ENCODE measurements at regions of chr4 and their contacts with region 1.

Region 1: DNA sequence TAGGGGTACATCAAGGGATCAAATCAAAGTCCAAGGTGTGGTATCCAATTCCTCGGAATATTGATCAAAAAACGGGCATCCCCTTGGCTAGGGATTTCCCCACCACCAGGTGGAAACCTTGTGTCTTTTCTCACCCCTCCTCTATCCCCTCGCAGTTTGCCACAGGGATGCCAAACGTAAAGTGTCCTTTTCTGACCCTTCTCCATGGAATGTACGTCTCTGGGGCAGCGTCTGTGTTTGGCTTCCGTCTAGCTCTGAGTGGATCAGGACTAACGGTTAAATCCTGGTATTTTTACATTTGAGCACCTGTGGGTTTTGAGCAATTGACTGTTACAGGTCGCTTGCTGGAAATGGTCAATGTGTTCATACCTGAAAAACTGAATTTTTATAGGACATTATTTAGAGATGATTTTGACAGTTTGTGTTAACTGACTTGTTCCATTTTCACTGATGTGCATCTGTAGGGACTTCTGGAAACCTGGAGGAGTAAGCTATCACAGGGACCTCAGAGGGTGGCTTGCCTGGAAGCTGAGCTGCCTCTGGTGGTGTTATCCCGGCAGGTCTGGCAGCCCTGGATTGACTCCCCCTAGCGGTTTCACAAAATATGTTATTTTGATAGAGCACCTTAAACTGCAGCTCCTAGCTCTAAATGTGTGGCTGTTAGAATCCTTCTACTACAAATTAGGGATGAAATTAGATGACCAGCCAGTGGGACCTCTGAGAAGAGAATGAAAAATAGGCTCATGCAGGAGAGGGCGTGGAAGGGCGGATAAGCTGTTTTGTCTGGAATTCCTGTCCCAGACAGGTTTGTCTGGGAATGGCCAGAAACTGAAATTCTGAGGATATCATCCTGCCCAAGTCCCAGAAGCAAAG is 8.8 kb upstream of the MGST2 start:
- DNase-seq: peak; percentile 67
- H3K4me3 Mint-ChIP-seq: peak overlapping the region; percentile 57
- H3K27ac Mint-ChIP-seq: peak overlapping the region; percentile 83
- H3K4me1 Mint-ChIP-seq: peaks cover 24% of the 10 kb centered on the region
- H3K27me3 Mint-ChIP-seq: peaks cover 2% of the 10 kb centered on the region

Region 2: GRCh38 chr4:139453371-139454110 is 203.3 kb before region 1 on chr4:
- CTCF ChIA-PET with region 1: no interaction called
- intact Hi-C with region 1: loop called (anchors 2 kb)
- DNase-seq: peak; percentile 98
- H3K4me3 Mint-ChIP-seq: peak overlapping the region; percentile 97
- H3K27ac Mint-ChIP-seq: peak overlapping the region; percentile 98
- H3K4me1 Mint-ChIP-seq: peaks cover 50% of the 10 kb centered on the region
- H3K27me3 Mint-ChIP-seq: no peaks in the 10 kb centered on the region

Region 3: DNA sequence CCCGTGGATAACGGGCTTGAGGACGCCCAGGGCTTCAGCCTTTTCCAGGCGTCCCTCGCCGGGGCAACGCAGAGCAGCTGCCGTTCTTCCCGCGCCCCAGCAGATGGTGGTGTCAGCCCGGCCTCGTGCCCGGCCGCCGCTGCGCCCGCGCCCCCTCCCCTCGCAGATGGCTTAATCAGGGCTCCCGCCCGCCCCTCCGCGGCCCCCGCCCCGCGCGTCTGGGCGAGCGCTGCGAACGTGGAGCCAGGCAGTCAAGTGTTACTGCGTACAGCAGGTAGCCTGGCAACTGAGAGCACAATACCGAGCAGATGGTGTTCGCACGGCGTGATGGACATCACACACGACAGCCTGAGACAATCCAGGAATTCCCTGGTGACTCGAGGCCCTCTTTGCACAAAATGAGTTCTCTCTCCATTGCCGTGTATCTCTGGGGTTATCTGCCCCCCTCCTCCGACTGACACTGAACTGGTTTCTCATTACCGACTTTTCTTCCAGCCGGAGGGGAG is 78.1 kb after region 1 on chr4:
- CTCF ChIA-PET with region 1: interaction called, 8 read pairs
- intact Hi-C with region 1: loop called (anchors 1 kb)
- DNase-seq: peak; percentile 78
- H3K4me3 Mint-ChIP-seq: peak overlapping the region; percentile 61
- H3K27ac Mint-ChIP-seq: no peak overlapping the region
- H3K4me1 Mint-ChIP-seq: peaks cover 22% of the 10 kb centered on the region
- H3K27me3 Mint-ChIP-seq: peaks cover 29% of the 10 kb centered on the region

Region 4: DNA sequence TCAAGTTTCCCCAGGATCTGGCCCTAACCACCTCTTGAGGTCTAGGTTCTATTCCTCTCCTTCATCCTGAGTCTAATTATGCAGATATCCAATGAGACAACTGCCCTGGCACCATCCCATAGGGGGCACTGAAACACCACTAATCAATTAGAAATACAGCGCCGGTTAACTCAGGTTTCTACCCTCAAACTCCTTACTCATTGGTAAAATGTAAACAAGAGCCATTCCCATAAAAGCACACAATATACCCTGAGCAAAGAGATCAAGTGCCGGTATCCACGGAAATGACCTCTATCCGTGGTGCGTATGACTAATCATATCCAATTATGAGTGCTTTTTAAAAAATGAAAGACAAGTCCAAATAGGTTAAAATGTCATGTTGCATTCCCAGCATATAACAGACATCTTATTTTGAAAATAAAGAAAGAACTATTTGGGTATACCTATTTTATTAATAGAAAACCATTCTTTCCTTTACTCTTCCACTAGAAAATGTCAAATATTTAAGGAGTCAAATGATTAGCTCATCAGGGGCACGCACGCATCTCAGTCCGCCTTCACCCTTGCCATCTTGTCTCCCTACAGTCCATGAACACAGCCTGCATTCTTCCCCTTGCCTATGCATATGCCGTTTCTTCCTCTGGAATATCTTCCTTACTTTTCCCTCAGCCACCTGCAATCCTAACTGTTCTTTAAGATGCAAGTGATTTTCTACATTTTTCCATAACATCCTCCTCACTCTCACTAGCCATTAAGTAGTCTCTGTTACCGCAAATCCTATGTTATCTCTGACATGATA is 356.0 kb after region 1 on chr4:
- CTCF ChIA-PET with region 1: no interaction called
- intact Hi-C with region 1: loop called (anchors 1 kb)
- DNase-seq: peak; percentile 69
- H3K4me3 Mint-ChIP-seq: no peak overlapping the region
- H3K27ac Mint-ChIP-seq: no peak overlapping the region
- H3K4me1 Mint-ChIP-seq: peaks cover 8% of the 10 kb centered on the region
- H3K27me3 Mint-ChIP-seq: peaks cover 1% of the 10 kb centered on the region

Region 5: DNA sequence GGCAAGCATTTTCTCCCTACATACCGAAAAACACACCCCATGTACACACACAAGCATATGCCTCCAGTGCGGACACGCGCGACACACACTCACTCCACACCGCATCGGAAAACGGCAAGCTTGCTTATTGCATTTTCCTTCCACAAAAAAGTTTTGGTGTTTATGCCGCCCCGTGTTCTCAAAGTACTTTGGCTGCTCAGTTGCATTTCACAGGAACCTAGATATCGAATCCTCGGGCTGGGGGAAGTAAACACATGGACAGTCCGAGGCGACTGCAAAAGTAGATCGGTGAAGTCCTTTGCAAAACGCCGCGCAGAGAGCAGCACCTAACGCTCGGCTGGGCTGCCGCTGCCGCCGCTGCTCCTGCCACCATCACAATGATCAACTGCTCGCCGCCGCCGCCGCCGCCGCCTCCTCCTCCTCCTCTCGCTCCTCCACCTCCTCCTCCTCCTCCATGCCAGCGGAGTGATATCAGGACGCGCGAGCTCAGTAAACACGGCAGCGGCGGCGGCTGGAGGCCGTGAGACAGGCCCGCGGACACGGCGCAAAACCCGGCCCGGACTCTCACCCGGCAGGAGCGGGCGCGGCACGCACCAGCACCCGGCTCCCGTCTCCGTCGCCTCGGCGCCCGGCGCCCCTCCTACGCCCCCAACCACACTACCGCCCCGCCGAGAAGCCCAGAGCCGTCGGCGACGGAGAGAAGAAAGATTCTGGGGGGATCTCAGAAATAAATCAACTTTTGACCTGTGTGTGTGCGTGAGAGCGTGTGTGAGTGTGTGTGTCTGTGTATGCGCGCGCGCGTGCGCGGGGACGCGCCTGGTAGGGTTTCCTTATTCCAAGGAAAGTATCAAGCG is 497.1 kb after region 1 on chr4 and contains the start of gene MAML3:
- CTCF ChIA-PET with region 1: no interaction called
- intact Hi-C with region 1: loop called (anchors 1 kb)
- DNase-seq: peak; percentile 85
- H3K4me3 Mint-ChIP-seq: peak within 1 kb of the TSS; percentile 82
- H3K27ac Mint-ChIP-seq: peak within 1 kb of the TSS; percentile 5
- H3K4me1 Mint-ChIP-seq: peaks cover 35% of the 10 kb centered on the region
- H3K27me3 Mint-ChIP-seq: peaks cover 13% of the 10 kb centered on the region
- total RNA-seq, gene MAML3: 0.52 to 0.76 TPM

Measured in activated naive CD4-positive, alpha-beta T cell treated with anti-CD3 and anti-CD28 coated beads for 36 hours (primary cell).